Mammary epithelial cell (primary cell): ENCODE measurements at regions of chr2 and their contacts with region 1.

Region 1: DNA sequence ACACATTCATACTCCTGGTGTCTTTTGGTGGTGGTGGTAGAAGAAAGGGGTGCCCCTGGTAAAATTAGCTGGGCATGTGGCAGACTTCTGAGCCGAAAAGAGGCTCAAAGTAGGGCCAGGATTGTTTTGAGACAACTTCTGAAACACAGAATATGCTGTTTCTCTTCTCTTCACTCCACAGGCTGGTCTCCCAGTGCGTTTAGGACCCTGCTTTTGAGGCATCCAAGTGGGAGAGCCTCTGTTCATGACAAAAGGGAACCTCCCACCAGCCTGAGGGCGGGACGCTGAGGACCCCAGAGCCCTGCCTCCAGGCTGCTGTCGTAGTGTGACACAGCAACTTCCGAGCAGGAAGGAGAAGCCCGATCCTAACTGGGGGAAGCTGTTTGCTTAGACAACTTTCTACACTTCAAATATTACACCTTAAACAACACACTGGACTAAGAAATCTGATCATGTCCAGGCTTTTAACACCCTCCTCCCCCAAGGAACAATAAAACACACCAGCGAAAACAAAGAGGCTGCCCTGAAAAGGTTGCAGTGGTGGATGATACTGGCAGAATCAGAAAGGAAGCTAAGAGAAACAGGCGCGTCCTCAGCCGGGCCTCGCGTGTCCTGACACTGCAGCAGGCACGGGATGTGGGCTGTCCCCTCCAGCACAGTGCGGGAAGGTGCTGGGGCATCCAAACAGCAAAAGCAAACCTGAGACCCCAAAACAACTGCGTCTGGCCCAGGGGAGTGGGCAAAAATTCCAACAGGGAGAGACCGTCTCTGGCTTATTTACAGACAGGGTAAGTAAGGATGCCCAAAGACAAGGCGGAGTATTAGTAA is 9.3 kb downstream of the SERTAD2 start:
- DNase-seq: peak; percentile 73
- H3K4me3 ChIP-seq: peak overlapping the region; percentile 44 to 52 (median 48)
- H3K27ac ChIP-seq: peak overlapping the region; percentile 97
- H3K4me1 ChIP-seq: peaks cover 70% of the 10 kb centered on the region
- H3K27me3 ChIP-seq: no peaks in the 10 kb centered on the region
- CTCF ChIP-seq: no peak

Region 2: DNA sequence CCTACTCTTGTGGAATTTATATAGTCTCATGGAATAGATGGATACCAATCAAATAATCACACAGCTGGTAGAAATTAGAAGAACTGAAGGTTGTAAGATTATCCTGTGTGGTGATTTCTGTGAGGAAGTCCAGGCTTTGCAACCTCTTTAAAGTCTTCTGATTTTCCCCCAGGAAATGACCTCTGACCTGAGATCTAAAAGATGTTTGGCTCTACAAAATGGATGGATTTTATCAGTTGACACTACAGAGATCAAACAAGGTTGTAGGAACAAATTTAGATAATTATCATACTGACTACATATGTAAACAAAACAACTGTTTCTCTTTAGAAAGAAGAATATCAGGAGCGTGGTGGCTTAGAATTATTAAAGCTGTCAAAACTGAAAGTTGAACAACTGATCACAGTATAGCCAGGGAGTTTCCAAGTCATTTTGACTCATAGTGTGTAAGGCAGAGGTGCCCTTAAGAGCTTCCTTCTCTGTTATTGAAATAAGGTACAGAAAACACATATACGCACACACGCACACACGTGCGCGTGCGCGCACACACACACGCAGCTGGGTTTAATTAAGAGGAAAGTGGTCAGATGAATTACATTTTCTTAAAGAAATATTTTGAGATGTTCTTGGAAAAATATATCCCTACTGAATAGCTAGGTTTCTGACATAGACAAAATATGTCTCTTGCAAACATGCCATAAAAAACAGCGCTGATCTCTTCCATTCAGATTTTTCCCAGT is 464.6 kb before region 1 on chr2:
- CTCF ChIA-PET with region 1: no interaction called
- dilution Hi-C with region 1: no loop called
- in situ Hi-C with region 1: no loop called
- intact Hi-C with region 1: no loop called
- DNase-seq: no peak
- H3K4me3 ChIP-seq: no peak overlapping the region
- H3K27ac ChIP-seq: no peak overlapping the region
- H3K4me1 ChIP-seq: no peaks in the 10 kb centered on the region
- H3K27me3 ChIP-seq: no peaks in the 10 kb centered on the region
- CTCF ChIP-seq: no peak

Region 3: DNA sequence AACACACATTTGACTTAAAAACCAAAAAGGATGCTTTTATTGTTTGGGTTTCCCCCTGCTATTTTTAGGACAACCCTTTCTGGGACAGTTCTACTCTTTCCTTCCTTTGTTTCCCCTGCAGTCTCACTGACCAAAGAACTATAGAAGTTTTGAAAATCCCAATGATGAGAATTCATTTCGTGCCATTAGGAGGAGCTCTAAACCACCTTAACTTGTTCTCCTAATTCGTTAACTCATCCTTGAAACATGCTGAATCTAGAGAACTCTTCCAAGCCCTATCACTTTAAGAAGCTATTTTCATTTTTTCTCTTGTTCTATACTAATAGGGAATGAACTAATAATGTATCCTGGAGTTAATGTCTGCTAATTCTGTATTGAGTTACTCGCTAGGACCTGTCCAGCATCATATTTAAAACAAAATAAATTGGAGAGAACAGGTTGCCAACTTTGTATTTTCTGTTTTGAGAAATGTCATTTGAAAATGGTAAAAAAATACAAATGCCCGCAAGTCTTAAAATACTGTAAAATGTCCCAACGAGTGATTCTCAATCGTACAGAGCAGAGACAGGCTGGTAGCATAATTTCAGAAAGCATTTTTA is 57.4 kb before region 1 on chr2:
- CTCF ChIA-PET with region 1: interaction called, 3 read pairs
- dilution Hi-C with region 1: no loop called
- in situ Hi-C with region 1: loop called in 1 of 2 experiments (anchors 10 kb)
- intact Hi-C with region 1: loop called (anchors 2 kb)
- DNase-seq: peak; percentile 47
- H3K4me3 ChIP-seq: no peak overlapping the region
- H3K27ac ChIP-seq: no peak overlapping the region
- H3K4me1 ChIP-seq: no peaks in the 10 kb centered on the region
- H3K27me3 ChIP-seq: no peaks in the 10 kb centered on the region
- CTCF ChIP-seq: peak; percentile 59 to 67

Region 4: DNA sequence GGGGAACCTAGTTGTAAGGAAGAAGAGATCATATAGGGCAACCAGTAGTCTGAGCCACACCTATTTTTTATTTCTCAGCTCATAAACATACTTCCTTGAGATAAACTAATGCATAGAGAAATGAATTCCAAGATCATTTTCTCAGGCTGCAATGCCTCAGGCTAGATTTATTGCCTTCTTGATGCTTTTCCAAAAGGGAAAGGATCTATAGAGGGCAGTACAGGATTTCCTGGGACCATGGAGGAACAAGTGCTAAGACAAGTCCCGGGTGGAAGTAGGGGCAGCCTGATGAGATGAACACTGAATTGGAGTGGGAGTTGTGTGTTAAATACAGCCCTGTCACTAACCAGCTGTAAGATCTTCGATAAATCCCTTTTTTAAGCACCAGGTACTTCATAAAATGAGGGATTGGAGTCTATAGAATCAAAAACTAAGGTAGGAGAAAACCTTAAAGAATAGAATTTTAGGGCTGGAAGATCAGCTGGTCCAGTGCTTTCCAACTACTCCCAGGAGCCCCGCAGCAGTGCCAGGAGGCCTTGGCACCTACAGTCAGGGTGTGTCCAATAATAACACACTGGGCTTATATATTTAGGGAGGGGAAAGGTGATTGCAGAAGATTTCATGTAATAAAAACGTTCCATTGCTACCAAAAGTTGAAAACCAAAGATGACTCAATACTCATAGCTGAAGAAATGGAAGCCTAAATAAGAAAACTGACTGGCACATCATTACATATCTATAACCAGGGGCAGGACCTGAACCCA is 48.8 kb before region 1 on chr2:
- CTCF ChIA-PET with region 1: no interaction called
- dilution Hi-C with region 1: no loop called
- in situ Hi-C with region 1: loop called in 1 of 2 experiments (anchors 10 kb)
- intact Hi-C with region 1: loop called (anchors 2 kb)
- DNase-seq: no peak
- H3K4me3 ChIP-seq: no peak overlapping the region
- H3K27ac ChIP-seq: no peak overlapping the region
- H3K4me1 ChIP-seq: peaks cover 13% of the 10 kb centered on the region
- H3K27me3 ChIP-seq: no peaks in the 10 kb centered on the region
- CTCF ChIP-seq: peak; percentile 19 to 40

Region 5: GRCh38 chr2:64767670-64768468 is 123.5 kb after region 1 on chr2:
- CTCF ChIA-PET with region 1: no interaction called
- dilution Hi-C with region 1: no loop called
- in situ Hi-C with region 1: no loop called
- intact Hi-C with region 1: loop called (anchors 1 kb)
- DNase-seq: peak; percentile 86
- H3K4me3 ChIP-seq: peak overlapping the region; percentile 57 to 75 (median 67)
- H3K27ac ChIP-seq: peak overlapping the region; percentile 86
- H3K4me1 ChIP-seq: peaks cover 28% of the 10 kb centered on the region
- H3K27me3 ChIP-seq: no peaks in the 10 kb centered on the region
- CTCF ChIP-seq: peak in 1 of 2 donors; percentile 0

Region 6: DNA sequence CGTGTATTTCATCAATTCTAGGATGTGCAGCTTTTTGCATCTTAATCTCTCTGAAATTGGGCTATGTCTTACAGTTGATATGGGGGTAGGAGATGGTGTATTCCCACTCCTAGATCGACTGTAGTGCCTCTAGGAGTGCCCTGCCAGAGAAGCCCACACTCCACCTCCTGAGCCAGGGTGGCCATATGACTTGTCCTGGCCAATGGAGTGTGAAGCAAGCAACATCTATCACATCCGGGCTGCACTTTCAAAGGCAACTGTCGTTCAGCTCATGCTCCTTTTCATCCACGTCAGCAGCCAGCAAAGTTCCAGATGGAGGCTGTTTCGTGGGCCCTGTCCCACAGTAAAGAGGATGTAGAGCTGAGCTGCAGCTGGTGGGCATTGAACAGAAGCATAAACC is 195.5 kb after region 1 on chr2:
- CTCF ChIA-PET with region 1: interaction called, 15 read pairs
- dilution Hi-C with region 1: no loop called
- in situ Hi-C with region 1: no loop called
- intact Hi-C with region 1: no loop called
- DNase-seq: no peak
- H3K4me3 ChIP-seq: no peak overlapping the region
- H3K27ac ChIP-seq: peak overlapping the region; percentile 66
- H3K4me1 ChIP-seq: peaks cover 37% of the 10 kb centered on the region
- H3K27me3 ChIP-seq: no peaks in the 10 kb centered on the region
- CTCF ChIP-seq: no peak

Region 7: DNA sequence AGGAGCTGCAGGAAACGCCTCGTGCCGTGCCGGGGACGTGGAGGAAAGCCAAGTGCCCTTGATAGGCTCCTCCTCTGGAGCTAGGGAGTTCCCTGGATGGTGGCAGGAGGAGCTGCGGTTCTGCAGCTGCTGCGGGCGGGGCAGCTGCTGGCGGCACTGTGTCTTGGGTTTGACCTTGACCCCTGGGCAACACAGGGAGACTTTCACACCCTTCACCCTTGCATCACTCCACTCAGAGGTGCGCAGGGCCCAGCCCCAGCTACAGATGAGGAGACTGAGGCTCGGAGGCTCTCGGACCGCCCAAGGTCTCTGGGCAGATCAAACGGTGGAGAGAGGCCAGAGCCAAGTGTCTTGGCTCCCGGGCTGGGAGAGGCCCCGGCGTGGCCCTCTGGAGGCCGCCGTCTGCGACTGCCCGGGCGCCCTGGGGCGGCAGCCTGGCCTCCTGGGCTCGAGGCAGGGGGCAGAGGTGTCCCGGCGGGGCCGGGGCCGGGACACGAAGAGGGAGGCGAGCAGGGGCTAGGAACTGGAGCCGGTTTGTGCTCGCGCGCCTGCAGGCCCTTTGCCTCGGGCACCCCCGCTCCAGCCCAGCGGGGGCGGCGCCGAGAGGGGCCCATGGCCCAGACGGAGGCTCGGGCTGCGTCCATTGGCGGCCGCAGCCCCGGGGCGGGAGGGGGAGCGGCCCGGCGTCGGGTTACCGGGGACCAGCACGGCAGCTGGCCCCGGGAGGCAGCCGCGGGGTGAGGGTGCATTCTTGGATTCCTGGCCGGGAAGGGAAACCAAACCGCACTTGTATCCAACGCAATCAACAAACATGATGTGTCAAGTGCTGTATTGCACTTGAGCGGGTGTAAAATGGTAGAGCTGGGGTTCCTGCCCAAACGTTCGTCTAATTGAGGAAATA is 215.2 kb after region 1 on chr2:
- CTCF ChIA-PET with region 1: interaction called, 8 read pairs
- dilution Hi-C with region 1: no loop called
- in situ Hi-C with region 1: loop called (anchors 5 to 10 kb)
- intact Hi-C with region 1: no loop called
- DNase-seq: peak; percentile 79
- H3K4me3 ChIP-seq: peak overlapping the region in 1 of 3 experiments; percentile 3
- H3K27ac ChIP-seq: peak overlapping the region; percentile 24
- H3K4me1 ChIP-seq: peaks cover 27% of the 10 kb centered on the region
- H3K27me3 ChIP-seq: no peaks in the 10 kb centered on the region
- CTCF ChIP-seq: no peak

Region 8: DNA sequence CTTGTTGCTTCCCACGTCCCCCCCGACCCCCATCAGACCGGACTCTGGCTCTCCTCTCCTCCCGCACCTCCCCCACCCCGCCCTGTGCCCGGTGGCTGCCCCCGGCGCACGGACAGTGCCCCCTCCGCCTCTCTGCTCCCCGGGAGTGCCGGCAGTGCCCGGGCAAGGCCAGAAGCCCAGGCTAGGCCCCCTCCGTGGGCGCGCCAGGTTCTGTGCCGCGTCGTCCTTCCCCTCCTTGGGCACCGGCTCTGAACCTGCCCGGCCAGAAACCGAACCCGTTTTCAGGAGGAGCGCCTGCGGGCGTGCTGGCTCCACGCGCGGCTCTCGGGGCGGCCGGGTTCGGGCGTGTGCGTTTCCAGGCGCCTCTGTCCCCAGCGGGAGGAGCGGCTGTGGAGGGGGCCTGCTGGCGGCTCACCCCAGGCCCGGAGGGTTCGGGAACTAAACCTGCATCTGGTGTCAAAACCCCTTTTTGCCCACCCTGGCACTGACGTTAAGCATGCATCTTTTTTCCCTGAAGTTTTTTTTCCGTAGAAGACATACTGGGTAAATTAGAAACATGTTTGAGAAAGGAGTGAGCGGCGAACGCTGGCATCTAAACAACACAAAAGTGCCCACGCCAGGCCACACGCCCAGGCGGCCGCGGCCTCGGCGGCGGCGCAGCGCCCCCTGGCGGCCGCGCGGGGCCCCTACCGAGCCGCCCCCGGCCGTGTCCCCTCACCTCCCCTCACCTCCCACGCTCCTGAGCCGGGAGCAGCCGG is 220.9 kb after region 1 on chr2:
- CTCF ChIA-PET with region 1: interaction called, 8 read pairs
- dilution Hi-C with region 1: no loop called
- in situ Hi-C with region 1: loop called (anchors 5 to 10 kb)
- intact Hi-C with region 1: loop called (anchors 1 kb)
- DNase-seq: peak; percentile 45
- H3K4me3 ChIP-seq: peak overlapping the region; percentile 41 to 50 (median 48)
- H3K27ac ChIP-seq: peak overlapping the region; percentile 45
- H3K4me1 ChIP-seq: peaks cover 22% of the 10 kb centered on the region
- H3K27me3 ChIP-seq: no peaks in the 10 kb centered on the region
- CTCF ChIP-seq: peak; percentile 37 to 50